ENCODE measurements at regions of chr3 and their contacts with region 1.

Region 1: GRCh38 chr3:47513125-47513929 is at the start of gene ELP6:
- DNase-seq: peak; percentile 99
- H3K4me3 Mint-ChIP-seq: peak within 1 kb of the TSS; percentile 98
- H3K27ac Mint-ChIP-seq: peak within 1 kb of the TSS; percentile 98
- H3K4me1 Mint-ChIP-seq: peaks cover 17% of the 10 kb centered on the region
- H3K27me3 Mint-ChIP-seq: peaks cover 13% of the 10 kb centered on the region
- total RNA-seq, gene ELP6: 45.9 and 49.7 TPM in 2 replicates

Region 2: DNA sequence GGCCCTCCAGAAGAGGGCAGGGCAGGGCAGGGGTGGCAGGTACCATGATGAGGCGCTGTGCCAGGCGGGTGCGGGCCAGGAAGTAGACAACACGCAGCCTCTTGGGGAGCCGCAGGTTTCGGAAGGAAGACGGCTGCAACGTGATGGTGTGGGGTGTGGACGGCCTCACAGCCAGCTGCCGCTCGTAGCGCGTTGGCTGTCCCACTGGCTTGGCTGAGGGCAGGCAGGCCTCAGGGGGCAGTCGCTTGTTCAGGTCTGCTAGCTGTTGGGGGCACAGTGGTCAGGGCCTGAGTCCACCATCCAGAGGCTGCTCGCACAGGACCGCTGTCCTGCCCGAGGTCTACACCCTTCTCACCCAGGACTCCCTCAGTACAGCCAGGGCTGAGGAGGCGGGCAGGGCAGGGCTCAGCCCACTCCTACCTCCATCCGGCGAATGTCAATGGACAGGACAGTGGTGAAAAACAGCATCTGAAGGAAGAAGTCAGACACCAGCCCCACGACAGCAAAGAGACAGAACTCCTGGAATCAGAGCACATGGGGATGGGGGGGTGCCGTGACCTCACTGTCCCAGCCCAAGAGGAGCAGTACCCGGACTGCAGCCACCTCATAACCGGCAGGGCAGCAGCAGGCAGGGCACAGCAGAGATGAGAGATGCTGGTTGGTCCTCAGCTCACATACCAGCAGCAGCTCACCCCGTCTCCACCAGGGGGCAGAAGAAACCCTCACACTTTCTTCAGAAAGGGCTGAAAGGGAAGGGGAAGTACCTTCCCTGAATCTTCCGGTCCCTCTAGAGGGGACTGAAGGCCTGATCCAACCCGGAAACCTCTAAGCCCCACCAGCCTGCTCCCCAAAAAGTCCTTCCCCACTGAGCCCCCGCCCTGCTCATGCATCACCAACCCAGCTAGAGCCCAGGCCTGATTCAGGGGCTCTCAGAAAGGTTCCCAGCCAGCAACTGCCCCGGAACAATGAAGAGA is 92.5 kb before region 1 on chr3:
- intact Hi-C with region 1: loop called (anchors 1 kb)
- DNase-seq: peak; percentile 97
- H3K4me3 Mint-ChIP-seq: peak overlapping the region; percentile 71
- H3K27ac Mint-ChIP-seq: peak overlapping the region; percentile 99
- H3K4me1 Mint-ChIP-seq: peaks cover 13% of the 10 kb centered on the region
- H3K27me3 Mint-ChIP-seq: no peaks in the 10 kb centered on the region

Measured in activated CD4-positive, alpha-beta T cell treated with anti-CD3 and anti-CD28 coated beads, Interleukin-2, amount 10 ng/mL, durations not matched to agents 24 days and 14 days (primary cell).